ENCODE measurements at regions of chr2 and their contacts with region 1.

Region 1: GRCh38 chr2:126657636-126658318 is 1.8 kb downstream of the GYPC start:
- DNase-seq: peak; percentile 70
- H3K4me3 Mint-ChIP-seq: peak overlapping the region; percentile 99
- H3K27ac Mint-ChIP-seq: peak overlapping the region; percentile 98
- H3K4me1 Mint-ChIP-seq: peaks cover 67% of the 10 kb centered on the region
- H3K27me3 Mint-ChIP-seq: no peaks in the 10 kb centered on the region

Region 2: DNA sequence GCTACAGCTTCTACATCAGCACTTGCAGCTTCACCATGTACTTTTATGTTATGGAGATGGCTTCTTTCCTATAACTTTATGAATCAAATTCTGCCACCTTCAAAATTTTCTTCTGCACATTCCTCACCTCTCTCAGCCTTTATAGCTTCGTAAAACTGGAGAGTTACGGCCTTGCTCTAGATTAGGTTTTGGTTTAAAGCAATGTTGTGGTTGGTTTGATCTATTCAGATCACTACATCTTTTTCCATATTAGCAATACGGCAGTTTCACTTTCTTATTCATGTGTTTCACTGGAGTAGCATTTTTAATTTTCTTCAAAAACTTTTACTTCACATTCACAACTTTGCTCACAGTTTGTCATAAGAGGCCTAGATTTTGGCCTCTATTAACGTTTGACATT is 244.7 kb before region 1 on chr2:
- intact Hi-C with region 1: loop called (anchors 10 kb)
- DNase-seq: no peak
- H3K4me3 Mint-ChIP-seq: no peak overlapping the region
- H3K27ac Mint-ChIP-seq: peak overlapping the region; percentile 8
- H3K4me1 Mint-ChIP-seq: peaks cover 9% of the 10 kb centered on the region
- H3K27me3 Mint-ChIP-seq: peaks cover 6% of the 10 kb centered on the region

Region 3: GRCh38 chr2:126699716-126700581 is 42.2 kb after region 1 on chr2:
- intact Hi-C with region 1: loop called (anchors 5 kb)
- DNase-seq: no peak
- H3K4me3 Mint-ChIP-seq: no peak overlapping the region
- H3K27ac Mint-ChIP-seq: no peak overlapping the region
- H3K4me1 Mint-ChIP-seq: peaks cover 7% of the 10 kb centered on the region
- H3K27me3 Mint-ChIP-seq: no peaks in the 10 kb centered on the region

Region 4: GRCh38 chr2:126776692-126777619 is 119.2 kb after region 1 on chr2:
- intact Hi-C with region 1: loop called (anchors 2 kb)
- DNase-seq: peak; percentile 72
- H3K4me3 Mint-ChIP-seq: peak overlapping the region; percentile 87
- H3K27ac Mint-ChIP-seq: peak overlapping the region; percentile 18
- H3K4me1 Mint-ChIP-seq: peaks cover 6% of the 10 kb centered on the region
- H3K27me3 Mint-ChIP-seq: peaks cover 10% of the 10 kb centered on the region

Region 5: GRCh38 chr2:127064642-127065250 is 407.0 kb after region 1 on chr2:
- intact Hi-C with region 1: loop called (anchors 2 kb)
- DNase-seq: peak; percentile 60
- H3K4me3 Mint-ChIP-seq: no peak overlapping the region
- H3K27ac Mint-ChIP-seq: peak overlapping the region; percentile 65
- H3K4me1 Mint-ChIP-seq: peaks cover 14% of the 10 kb centered on the region
- H3K27me3 Mint-ChIP-seq: no peaks in the 10 kb centered on the region

Region 6: DNA sequence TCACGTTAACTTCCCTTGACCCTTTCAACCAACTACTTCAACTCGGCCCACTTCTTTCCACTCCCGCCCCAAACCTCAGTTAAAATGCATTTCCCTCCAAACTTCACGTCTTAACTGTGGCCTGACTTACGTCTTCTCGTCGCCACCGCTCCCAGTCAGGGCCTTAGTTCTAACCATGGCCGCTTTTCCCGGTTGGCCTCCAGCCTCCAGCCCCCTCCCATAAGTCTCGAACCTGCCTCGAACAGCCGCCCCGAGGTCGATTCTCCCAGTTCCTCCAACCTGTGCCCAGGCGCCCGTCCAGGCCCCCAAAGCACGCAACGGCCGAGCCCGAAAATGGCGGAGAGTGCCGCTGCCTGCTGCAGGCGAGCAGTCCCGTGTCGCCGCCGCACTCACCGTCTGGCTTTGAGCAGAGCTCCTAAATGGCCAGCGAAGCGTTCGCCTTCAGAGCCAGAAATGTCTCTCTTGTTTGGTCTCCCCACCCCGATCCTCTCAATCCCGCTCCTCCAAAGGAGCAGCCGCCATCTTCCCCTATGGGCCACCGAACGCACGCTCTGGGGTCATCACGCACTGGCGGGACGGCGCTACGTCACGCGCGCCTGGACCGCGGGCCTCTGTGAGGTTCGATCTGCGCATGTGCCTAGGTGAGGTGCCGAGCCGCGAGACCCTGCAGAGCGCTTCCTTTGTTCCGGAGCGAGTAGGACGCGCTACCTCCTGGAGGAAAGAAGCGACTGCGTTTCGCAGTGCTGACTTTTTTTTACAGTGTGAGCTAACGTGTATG is 1153.0 kb after region 1 on chr2 and contains the start of gene WDR33:
- intact Hi-C with region 1: loop called (anchors 10 kb)
- DNase-seq: peak; percentile 94
- H3K4me3 Mint-ChIP-seq: peak within 1 kb of the TSS; percentile 95
- H3K27ac Mint-ChIP-seq: peak within 1 kb of the TSS; percentile 94
- H3K4me1 Mint-ChIP-seq: peaks cover 42% of the 10 kb centered on the region
- H3K27me3 Mint-ChIP-seq: peaks cover 6% of the 10 kb centered on the region
- total RNA-seq, gene WDR33: 81.0 and 82.4 TPM in 2 replicates

Measured in activated T-helper 1 cell treated with anti-CD3 and anti-CD28 coated beads, Interleukin-12 subunit alpha, Interleukin-12 subunit beta, Interleukin-2, Interleukin-4 antibody, amounts not matched to agents 30 ng/mL and 10 ng/mL and 1 ng/mL, durations not matched to agents 14 hours and 24 hours and 36 hours (primary cell).